Activated CD4-positive, alpha-beta T cell treated with anti-CD3 and anti-CD28 coated beads, Interleukin-2, amount 10 ng/mL, durations not matched to agents 24 days and 14 days (primary cell): ENCODE measurements at regions of chr9 and their contacts with region 1.

Region 1: DNA sequence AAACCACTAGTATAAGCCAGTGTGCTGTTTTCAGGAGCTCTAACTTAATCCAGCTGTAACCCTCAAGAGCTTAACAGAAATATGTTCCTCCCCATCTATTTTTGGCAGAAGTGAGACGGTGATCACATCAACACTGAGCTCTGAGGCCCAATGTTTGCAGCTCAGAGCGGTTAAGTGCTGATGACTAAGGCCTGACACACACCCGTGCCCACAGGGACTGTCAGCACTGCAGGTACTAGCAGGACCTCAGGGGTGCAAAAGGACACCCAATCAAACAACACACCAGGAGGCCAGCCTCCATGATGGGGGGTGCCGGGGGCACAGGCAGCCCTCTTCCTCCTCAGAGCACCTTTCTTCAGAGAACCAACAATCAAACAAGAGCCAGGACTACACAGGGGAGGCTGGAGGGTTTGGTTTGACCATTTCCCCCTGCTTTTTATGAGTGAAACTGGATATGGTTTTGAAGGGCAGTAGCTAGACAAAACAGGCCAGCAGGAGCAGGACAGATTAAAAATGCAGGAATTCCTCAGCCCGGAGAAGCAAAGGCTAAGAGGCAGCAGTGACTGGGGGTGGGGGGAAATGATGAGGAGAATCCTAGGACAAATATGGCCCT is 61.3 kb downstream of the RAPGEF1 start:
- DNase-seq: peak; percentile 92
- H3K4me3 Mint-ChIP-seq: peak overlapping the region; percentile 75
- H3K27ac Mint-ChIP-seq: peak overlapping the region; percentile 95
- H3K4me1 Mint-ChIP-seq: peaks cover 72% of the 10 kb centered on the region
- H3K27me3 Mint-ChIP-seq: no peaks in the 10 kb centered on the region

Region 2: GRCh38 chr9:131590908-131591844 is 87.4 kb before region 1 on chr9:
- intact Hi-C with region 1: no loop called
- DNase-seq: peak; percentile 92
- H3K4me3 Mint-ChIP-seq: peak overlapping the region; percentile 15
- H3K27ac Mint-ChIP-seq: peak overlapping the region; percentile 87
- H3K4me1 Mint-ChIP-seq: peaks cover 33% of the 10 kb centered on the region
- H3K27me3 Mint-ChIP-seq: no peaks in the 10 kb centered on the region

Region 3: GRCh38 chr9:131657890-131658752 is 20.5 kb before region 1 on chr9:
- intact Hi-C with region 1: loop called (anchors 1 kb)
- DNase-seq: peak; percentile 74
- H3K4me3 Mint-ChIP-seq: peak overlapping the region; percentile 76
- H3K27ac Mint-ChIP-seq: peak overlapping the region; percentile 99
- H3K4me1 Mint-ChIP-seq: peaks cover 74% of the 10 kb centered on the region
- H3K27me3 Mint-ChIP-seq: no peaks in the 10 kb centered on the region

Region 4: DNA sequence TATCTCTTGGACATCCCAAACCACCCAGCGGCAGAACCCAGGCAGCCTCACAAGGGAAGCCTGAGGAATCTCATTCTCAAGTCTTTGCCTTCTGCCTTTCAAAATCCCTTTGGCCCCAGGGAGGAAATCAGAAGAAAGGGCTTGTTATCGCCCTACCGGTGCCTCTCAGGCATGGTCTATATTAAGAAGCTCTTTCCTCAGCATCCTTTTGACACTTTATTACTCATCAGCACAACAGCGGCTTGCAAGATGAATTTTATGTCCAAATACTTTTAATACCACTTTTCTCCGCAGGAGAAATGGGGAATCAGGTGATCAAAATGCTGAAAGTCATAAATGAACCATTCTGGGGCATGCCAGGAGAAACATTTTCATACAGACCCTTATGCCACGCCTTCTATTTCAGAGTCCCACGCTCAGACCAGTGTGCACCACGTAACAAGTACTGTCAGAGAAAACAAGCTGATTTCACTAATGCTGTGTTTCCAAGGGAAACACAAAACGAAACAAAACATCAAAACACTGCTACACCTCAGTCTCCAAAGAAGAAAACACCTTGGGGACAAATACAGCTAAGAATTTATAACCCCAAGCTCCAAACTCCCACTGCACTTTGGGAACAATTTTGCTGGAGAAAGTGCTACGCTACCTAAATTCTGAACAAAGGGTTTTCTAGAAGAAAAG is 31.3 kb after region 1 on chr9:
- intact Hi-C with region 1: loop called (anchors 2 kb)
- DNase-seq: peak; percentile 85
- H3K4me3 Mint-ChIP-seq: peak overlapping the region; percentile 72
- H3K27ac Mint-ChIP-seq: peak overlapping the region; percentile 98
- H3K4me1 Mint-ChIP-seq: peaks cover 68% of the 10 kb centered on the region
- H3K27me3 Mint-ChIP-seq: no peaks in the 10 kb centered on the region